Common myeloid progenitor, CD34-positive (primary cell): ENCODE measurements at regions of chr1 and their contacts with region 1.

Region 1: DNA sequence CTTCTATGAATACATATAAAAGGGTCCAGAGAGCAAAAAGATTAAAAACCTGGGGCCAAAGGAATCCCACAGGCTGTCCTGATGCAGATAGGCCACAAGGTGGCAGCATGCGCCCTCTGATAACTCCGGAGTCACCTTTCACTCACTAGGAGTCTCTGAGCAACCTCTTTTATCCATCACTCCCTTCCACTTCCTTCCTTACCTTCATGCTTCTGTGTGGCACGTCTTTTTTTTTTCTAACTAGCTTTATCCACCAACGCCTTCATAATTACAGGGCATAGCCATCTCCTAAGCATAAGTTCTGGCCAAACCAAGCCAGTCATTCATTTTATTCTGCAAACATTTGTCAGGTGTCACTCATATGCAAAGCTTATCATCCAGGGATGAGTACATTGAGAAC is 3.9 kb upstream of the PGLYRP4 start:
- DNase-seq: peak; percentile 61 to 84 (median 80)
- H3K4me3 ChIP-seq: no peak overlapping the region
- H3K27ac ChIP-seq: no peak overlapping the region
- H3K4me1 ChIP-seq: peaks cover 0 to 16% (median 11%) of the 10 kb centered on the region in 4 experiments
- H3K27me3 ChIP-seq: no peaks in the 10 kb centered on the region

Region 2: DNA sequence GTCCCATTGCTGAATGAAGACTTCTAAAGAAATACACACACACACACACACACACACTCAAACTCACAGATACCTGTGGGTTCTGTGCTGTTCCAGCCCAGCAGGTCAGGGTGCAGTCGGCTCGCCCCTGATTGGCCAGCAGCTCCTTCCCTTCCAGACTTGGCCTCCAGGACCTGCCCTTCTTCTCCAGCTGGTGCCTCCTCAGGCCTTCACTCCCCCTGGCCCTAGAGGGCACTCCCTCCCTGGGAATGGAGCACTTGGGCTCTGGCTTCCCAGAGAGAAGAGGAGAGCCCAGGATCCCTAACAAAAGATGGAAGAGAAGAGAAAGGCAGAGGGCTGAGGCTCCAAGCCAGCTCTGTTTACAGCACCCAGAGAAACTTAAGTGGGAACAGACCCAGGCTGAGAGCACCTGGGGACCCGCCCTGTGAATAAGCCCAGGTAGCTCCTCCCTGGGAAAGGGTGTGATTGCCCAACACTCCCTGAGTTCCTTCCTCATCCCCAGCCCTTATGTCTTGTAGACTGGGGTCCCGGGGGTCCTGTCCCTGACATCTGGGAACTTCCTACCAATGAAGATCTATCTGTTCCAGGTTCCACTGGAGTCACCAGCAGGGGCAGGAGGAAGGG is 39.8 kb before region 1 on chr1 and contains the start of gene PGLYRP3:
- CTCF ChIA-PET with region 1: interaction called, 12 read pairs
- POLR2A ChIA-PET with region 1: no interaction called
- DNase-seq: no peak
- H3K4me3 ChIP-seq: no peak within 1 kb of the TSS
- H3K27ac ChIP-seq: no peak within 1 kb of the TSS
- H3K4me1 ChIP-seq: peaks cover 0 to 8% (median 1%) of the 10 kb centered on the region in 4 experiments
- H3K27me3 ChIP-seq: no peaks in the 10 kb centered on the region

Region 3: DNA sequence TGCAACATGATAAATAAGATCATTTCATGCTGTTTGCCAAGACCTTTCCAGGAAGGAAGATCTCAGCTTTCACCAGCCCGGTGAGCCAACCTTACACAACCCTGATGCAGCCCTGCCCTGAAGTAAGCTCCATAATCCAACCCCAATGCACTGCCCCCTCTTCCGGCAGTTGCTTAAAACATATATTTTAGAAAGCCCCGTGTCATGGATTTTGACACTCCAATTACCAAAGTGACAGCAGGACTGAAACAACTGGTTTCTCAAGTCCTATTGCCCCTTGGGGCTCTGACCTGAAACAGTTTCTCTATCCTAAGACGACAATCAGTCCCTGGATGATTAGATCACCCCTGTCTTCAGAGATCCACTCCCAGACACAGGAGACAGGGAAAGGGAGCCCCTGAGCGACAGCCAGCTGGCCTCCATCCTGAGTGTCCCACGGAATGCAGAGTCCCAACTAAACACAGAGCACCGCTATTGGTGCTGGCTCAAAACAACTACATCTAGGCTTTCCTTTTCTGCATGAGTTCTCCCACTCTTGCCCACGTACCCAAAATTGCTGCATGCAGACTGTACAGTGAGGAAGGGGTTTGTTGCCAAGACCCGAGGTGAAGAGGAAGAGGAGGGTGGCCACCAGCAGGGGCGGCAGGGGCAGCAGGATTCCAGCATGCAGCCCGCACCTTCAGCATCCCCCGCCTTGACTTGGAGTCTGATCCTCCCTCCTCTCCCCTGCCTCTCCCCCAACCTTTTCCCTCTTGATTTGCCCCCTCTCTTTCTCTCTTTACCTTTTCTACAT is 13.0 kb after region 1 on chr1:
- CTCF ChIA-PET with region 1: interaction called, 27 read pairs
- POLR2A ChIA-PET with region 1: no interaction called
- DNase-seq: no peak
- H3K4me3 ChIP-seq: no peak overlapping the region
- H3K27ac ChIP-seq: no peak overlapping the region
- H3K4me1 ChIP-seq: peaks cover 0 to 12% (median 2%) of the 10 kb centered on the region in 4 experiments
- H3K27me3 ChIP-seq: no peaks in the 10 kb centered on the region

Region 4: DNA sequence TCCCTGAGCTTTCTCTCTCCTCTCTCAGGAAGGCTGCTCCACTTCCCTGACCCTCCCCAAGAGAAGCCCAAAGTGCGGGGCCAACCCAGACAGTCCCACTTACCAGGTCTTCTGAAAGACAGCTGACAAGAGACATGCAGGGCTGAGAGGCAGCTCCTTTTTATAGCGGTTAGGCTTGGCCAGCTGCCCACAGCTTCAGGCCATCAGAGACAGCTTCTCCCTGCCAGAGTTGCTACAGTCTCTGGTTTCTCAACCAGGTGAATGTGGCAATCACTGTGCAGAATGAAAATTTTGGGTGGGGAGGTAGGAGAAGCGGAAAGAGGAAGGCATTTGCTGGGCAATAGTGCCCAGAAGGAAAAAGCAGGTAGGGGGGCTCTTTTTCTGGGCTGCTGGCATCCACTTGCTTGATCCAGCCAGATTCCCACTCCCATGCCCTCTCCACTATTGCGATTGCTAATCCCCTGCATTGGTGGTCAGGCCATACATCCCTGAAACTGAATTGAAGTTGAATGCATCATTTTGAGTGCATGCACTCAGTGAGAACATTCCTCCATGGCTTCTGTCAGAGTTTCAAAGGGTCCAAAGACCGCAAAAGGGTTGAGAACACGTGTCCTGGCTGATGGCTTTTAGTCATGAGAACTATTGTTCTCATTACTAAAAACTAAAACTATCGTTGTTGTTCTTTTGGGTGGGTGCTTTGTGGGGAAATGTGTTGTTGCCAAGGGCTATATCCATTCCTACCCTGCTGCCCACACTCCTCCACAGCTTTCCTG is 38.6 kb after region 1 on chr1 and contains the start of gene S100A8:
- CTCF ChIA-PET with region 1: interaction called, 12 read pairs
- POLR2A ChIA-PET with region 1: no interaction called
- DNase-seq: peak in 2 of 3 donors; percentile 22 to 28
- H3K4me3 ChIP-seq: peak within 1 kb of the TSS in 3 of 7 experiments; percentile 16 to 37 (median 31)
- H3K27ac ChIP-seq: no peak within 1 kb of the TSS
- H3K4me1 ChIP-seq: peaks cover 8 to 47% (median 24%) of the 10 kb centered on the region in 4 experiments
- H3K27me3 ChIP-seq: no peaks in the 10 kb centered on the region

Region 5: GRCh38 chr1:153404768-153405167 is 52.2 kb after region 1 on chr1:
- CTCF ChIA-PET with region 1: interaction called, 97 read pairs
- POLR2A ChIA-PET with region 1: no interaction called
- DNase-seq: peak; percentile 50 to 75 (median 72)
- H3K4me3 ChIP-seq: no peak overlapping the region
- H3K27ac ChIP-seq: no peak overlapping the region
- H3K4me1 ChIP-seq: no peaks in the 10 kb centered on the region
- H3K27me3 ChIP-seq: peaks cover 0 to 4% (median 3%) of the 10 kb centered on the region in 5 experiments

Region 6: GRCh38 chr1:153494976-153495535 is 142.5 kb after region 1 on chr1:
- CTCF ChIA-PET with region 1: interaction called, 199 read pairs
- POLR2A ChIA-PET with region 1: interaction called, 3 read pairs
- DNase-seq: peak; percentile 70 to 82 (median 73)
- H3K4me3 ChIP-seq: no peak overlapping the region
- H3K27ac ChIP-seq: no peak overlapping the region
- H3K4me1 ChIP-seq: peaks cover 0 to 19% (median 14%) of the 10 kb centered on the region in 4 experiments
- H3K27me3 ChIP-seq: peaks cover 0 to 4% (median 1%) of the 10 kb centered on the region in 5 experiments